Ascending aorta (tissue), 2 donors: ENCODE measurements at regions of chr6 and their contacts with region 1.

Region 1: GRCh38 chr6:71727632-71728294 is 158.6 kb upstream of the RIMS1 start:
- DNase-seq: no peak
- H3K4me3 ChIP-seq: no peak overlapping the region
- H3K27ac ChIP-seq: no peak overlapping the region
- H3K4me1 ChIP-seq: peaks cover 0 to 13% of the 10 kb centered on the region in 2 donors
- H3K27me3 ChIP-seq: no peaks in the 10 kb centered on the region
- CTCF ChIP-seq: no peak

Region 2: GRCh38 chr6:71383901-71384489 is 343.8 kb before region 1 on chr6:
- intact Hi-C with region 1: loop called (anchors 10 kb)
- DNase-seq: no peak
- H3K4me3 ChIP-seq: no peak overlapping the region
- H3K27ac ChIP-seq: no peak overlapping the region
- H3K4me1 ChIP-seq: peaks cover 0 to 4% of the 10 kb centered on the region in 2 donors
- H3K27me3 ChIP-seq: no peaks in the 10 kb centered on the region
- CTCF ChIP-seq: peak; percentile 47 to 78 (median 52)

Region 3: GRCh38 chr6:73079978-73080377 is 1352.2 kb after region 1 on chr6:
- intact Hi-C with region 1: no loop called
- DNase-seq: no peak
- H3K4me3 ChIP-seq: no peak overlapping the region
- H3K27ac ChIP-seq: no peak overlapping the region
- H3K4me1 ChIP-seq: no peaks in the 10 kb centered on the region
- H3K27me3 ChIP-seq: no peaks in the 10 kb centered on the region
- CTCF ChIP-seq: no peak